ENCODE measurements at regions of chr18 and their contacts with region 1.

Region 1: GRCh38 chr18:32092422-32093101 is 888 bp downstream of the RNF138 start:
- DNase-seq: peak; percentile 100
- H3K4me3 Mint-ChIP-seq: peak overlapping the region; percentile 91
- H3K27ac Mint-ChIP-seq: peak overlapping the region; percentile 97
- H3K4me1 Mint-ChIP-seq: peaks cover 43% of the 10 kb centered on the region
- H3K27me3 Mint-ChIP-seq: no peaks in the 10 kb centered on the region

Region 2: DNA sequence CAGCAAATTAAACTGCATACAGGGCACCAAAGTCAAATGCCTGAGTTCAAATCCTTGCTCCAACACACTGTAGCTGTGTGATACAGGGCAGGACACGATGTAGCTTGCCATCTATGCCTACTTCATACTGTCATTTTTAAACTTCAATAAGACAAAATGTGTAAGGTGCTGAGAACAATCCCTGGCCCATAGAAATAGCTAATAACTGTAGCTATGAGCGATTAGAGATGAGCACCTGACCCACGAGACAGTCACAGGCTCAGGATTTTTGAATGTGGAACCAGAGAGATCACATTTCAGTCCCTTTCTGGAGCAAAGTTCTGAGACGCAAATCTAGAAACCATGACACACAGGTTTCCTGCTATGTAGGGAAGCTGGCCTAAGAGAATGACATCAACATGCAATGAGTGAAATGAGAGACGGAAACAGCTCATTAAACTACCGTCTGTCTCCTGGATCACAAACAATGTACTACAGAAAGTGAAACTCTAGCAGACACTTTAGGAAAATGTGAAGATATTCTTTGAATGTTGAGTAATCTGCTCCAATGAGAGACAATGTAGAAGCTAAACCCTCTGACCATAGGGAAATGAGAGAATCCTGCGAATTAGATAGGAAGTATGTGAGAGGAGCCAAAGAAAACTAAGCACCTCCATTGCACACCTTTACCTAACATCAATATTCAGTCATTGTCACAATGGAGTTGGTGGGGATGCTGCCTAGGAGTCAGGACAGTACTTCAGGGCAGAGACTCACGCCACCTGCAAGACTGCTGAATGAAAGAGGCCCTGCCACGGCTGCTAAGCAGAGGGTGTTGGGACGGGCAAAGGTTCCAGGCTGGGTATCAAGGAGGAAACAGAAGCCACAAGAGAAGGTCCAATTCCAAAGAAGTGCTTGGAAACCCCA is 433.6 kb before region 1 on chr18:
- intact Hi-C with region 1: loop called (anchors 1 kb)
- DNase-seq: peak; percentile 73
- H3K4me3 Mint-ChIP-seq: peak overlapping the region; percentile 50
- H3K27ac Mint-ChIP-seq: peak overlapping the region; percentile 63
- H3K4me1 Mint-ChIP-seq: peaks cover 13% of the 10 kb centered on the region
- H3K27me3 Mint-ChIP-seq: peaks cover 4% of the 10 kb centered on the region

Region 3: DNA sequence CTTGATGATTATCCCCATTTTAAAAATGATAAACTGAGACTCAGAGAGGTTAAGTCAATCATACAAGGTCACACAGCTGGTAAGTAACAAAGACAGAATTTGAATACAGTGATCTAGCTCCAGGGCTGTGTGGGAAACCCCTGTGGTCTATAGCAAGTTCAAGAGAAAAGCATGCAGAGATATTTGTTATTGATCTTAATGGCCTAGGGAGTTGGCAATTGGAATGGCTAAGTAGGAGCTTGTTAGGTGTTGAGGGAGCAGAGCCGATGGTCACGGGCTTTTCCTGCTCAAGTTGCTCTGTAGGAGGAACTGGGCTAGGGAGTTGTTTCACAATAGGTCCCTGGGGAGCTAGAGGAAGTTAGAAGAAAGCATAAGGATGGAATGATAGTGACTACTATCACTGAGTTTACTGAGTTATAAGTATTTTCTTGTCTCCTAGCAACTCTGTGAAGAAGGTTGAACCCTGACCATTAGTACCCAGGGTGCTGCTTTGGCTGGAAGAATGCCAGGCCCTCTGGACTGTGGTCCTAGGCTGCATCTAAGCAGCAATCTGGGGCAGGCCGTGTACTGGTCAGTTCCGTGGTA is 44.0 kb before region 1 on chr18:
- intact Hi-C with region 1: loop called (anchors 1 kb)
- DNase-seq: peak; percentile 73
- H3K4me3 Mint-ChIP-seq: peak overlapping the region; percentile 73
- H3K27ac Mint-ChIP-seq: peak overlapping the region; percentile 95
- H3K4me1 Mint-ChIP-seq: peaks cover 38% of the 10 kb centered on the region
- H3K27me3 Mint-ChIP-seq: no peaks in the 10 kb centered on the region

Region 4: DNA sequence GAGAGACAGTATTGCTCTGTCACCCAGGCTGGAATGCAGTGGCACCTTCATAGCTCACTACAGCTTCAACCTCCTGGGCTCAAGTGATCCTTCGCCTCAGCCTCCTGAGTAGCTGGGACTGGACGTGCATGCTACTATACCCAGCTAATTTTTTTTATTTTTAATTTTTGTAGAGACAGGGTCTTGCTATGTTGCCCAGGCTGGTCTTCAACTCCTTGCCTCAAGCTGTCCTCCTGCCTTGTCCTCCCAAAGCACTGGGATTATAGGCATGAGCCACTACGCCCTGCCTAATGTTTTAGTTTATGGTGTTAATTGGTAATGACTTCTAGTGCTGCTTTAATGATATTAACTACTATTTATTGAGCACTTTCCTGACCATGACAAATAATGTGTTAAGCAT is 17.4 kb after region 1 on chr18:
- intact Hi-C with region 1: loop called (anchors 1 kb)
- DNase-seq: peak; percentile 33
- H3K4me3 Mint-ChIP-seq: no peak overlapping the region
- H3K27ac Mint-ChIP-seq: no peak overlapping the region
- H3K4me1 Mint-ChIP-seq: peaks cover 37% of the 10 kb centered on the region
- H3K27me3 Mint-ChIP-seq: no peaks in the 10 kb centered on the region

Region 5: DNA sequence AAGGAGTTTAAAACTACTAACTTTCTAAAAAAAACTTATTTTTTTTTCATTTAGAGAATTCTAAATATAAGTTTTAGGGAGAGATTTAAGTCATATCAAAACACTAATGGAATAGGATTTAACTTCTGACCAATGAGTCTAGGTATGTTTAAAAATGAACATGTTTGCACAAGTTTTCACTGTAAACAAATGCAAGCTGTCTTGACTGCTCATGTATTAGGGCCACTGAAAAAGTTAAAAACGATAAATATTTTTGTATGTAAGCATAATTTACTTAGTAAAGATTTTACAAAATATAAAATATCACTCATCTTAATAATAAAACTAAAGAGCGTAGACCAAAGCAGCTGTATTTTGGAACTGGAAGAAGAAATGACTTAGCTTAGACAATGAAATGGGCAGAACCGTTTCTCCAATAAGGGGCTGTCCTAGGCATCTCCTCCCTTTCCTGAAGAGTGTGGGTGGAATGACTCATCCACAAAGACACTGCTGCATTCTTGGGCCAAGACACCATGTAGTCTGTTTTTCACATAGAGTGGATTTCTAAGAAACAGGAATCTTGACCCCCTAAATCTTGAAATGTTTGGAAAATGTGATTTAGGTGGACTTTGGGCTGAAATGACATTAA is 216.0 kb after region 1 on chr18:
- intact Hi-C with region 1: no loop called
- DNase-seq: no peak
- H3K4me3 Mint-ChIP-seq: no peak overlapping the region
- H3K27ac Mint-ChIP-seq: no peak overlapping the region
- H3K4me1 Mint-ChIP-seq: no peaks in the 10 kb centered on the region
- H3K27me3 Mint-ChIP-seq: no peaks in the 10 kb centered on the region

Measured in activated CD4-positive, alpha-beta T cell treated with anti-CD3 and anti-CD28 coated beads, Interleukin-2, amount 10 ng/mL, durations not matched to agents 24 days and 14 days (primary cell).